Calu3 (cell line): ENCODE measurements at regions of chr6 and their contacts with region 1.

Region 1: DNA sequence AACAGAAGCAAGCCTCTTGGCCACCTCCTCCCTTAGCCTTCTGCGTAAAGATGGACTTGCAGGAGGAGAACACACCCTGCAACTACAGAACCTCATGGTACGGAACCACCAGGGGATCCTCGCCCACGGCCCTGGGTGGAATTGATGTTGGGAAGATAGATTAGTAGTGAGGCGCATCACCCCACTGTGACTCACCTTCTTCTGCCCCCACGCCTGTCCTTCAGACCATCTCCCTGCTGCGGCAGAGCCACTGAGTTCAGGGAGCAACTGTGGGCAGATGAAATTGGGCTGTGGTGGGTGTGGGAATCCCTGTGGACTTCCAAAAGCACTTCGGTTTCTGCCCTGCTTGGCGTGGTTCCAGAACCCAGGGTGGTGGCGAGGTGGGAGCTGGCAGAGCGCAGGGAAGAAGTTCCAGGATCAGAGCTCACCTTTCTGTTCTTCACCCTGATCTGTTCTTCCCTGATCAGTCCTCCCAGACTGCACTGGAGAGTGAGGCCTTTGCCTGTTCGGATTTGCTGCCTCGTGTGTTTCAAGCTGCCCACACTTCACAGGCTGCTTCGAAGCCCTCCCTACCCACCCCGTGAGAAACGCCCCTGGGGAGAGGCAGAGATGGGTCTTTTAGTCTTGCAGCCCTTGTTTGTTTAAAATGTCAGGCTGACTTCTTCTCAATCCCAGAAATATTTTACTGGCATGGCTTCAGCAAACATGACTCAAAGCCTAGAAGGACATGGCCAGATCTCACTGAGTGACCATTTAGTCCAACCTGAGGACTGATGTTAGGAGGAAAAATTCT is 92.8 kb upstream of the MLN start:
- DNase-seq: no peak
- H3K4me3 Mint-ChIP-seq: no peak overlapping the region
- H3K27ac Mint-ChIP-seq: no peak overlapping the region
- H3K4me1 Mint-ChIP-seq: no peaks in the 10 kb centered on the region
- H3K27me3 Mint-ChIP-seq: peaks cover 100% of the 10 kb centered on the region
- CTCF ChIP-seq: no peak

Region 2: DNA sequence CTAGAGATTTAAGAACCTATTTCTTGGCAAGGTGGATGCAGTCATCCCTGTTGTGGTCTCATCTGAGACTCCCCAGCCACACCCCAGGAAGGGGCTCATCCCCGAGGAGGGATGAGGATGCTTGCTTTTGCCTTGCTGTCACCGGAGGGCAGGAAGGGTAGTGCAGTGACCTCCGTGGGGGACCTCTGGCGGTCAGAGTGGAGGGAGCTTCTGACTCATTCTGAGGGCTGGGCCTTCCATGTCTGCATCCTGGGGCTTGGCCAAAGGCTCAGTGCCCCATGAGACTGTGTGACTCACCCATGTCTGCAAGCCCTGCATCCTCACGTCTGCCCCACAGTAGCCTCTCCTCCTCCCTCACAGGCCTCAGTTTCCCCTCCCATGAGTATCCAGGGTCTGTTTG is 223.8 kb before region 1 on chr6:
- CTCF ChIA-PET with region 1: no interaction called
- intact Hi-C with region 1: no loop called
- DNase-seq: peak; percentile 94
- H3K4me3 Mint-ChIP-seq: no peak overlapping the region
- H3K27ac Mint-ChIP-seq: peak overlapping the region; percentile 55
- H3K4me1 Mint-ChIP-seq: peaks cover 57% of the 10 kb centered on the region
- H3K27me3 Mint-ChIP-seq: no peaks in the 10 kb centered on the region
- CTCF ChIP-seq: peak; percentile 85

Region 3: DNA sequence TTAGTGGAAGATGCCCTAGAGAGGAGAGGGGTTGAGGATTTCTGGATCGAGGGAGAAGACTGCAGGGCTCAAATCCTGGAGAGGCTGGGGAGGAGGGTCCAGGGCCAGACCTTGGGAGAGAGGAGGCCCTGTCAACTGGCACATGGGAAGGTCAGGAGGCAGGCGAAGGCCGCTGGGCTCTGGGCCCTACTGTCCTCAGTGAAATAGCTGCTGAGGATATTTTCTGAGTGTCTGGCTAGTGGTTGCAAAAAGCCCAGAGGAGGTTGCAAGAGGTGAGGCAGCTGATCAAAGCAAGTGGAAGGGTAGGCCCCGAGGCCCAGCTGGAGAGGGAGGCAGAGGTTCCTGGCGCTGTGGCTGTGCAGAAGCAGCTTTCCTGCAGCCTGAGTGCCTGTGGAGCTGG is 10.6 kb after region 1 on chr6:
- CTCF ChIA-PET with region 1: interaction called, 10 read pairs
- intact Hi-C with region 1: no loop called
- DNase-seq: no peak
- H3K4me3 Mint-ChIP-seq: no peak overlapping the region
- H3K27ac Mint-ChIP-seq: no peak overlapping the region
- H3K4me1 Mint-ChIP-seq: no peaks in the 10 kb centered on the region
- H3K27me3 Mint-ChIP-seq: peaks cover 87% of the 10 kb centered on the region
- CTCF ChIP-seq: no peak